Posterior vena cava (tissue), 2 donors: ENCODE measurements at regions of chr15 and their contacts with region 1.

Region 1: DNA sequence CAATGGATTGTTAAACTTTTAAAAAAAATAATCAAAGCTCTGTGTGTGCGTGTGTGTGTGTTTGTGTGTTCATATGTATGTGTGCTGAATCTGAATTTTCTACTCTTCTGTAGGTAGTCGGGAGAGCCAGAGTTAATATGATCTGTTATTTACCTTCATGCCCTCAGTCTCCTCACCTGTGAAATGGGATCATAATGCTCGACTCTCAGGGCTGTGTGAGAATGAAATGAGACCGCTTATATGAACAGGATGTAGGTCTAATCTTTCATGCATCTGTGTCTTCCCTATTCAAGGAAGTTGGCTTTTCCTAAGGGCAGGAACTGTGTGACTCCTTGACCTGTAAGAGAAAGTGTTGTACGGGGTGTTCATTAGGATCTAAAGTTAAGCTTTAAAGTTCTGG is 182.2 kb downstream of the RPLP1 start:
- DNase-seq: no peak

Region 2: DNA sequence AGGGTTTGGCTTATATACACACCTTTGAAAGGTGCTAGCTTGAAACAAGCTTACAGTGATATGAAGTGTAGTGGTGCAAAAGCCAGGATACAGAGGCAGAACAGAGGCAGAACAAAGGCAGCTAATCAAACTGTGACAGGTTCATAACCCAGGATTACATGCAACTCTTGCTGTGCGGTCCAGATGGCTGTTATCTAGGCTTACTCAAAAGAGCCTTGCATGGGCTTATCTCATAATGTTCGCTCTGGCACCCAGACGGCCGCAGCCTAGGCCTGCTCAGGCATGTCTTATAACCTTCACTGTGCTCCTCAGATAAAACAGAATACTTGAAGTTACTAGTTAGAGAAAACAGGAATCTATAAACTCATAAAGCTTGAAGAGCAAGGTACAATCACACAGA is 643.1 kb before region 1 on chr15:
- intact Hi-C with region 1: no loop called
- DNase-seq: no peak

Region 3: DNA sequence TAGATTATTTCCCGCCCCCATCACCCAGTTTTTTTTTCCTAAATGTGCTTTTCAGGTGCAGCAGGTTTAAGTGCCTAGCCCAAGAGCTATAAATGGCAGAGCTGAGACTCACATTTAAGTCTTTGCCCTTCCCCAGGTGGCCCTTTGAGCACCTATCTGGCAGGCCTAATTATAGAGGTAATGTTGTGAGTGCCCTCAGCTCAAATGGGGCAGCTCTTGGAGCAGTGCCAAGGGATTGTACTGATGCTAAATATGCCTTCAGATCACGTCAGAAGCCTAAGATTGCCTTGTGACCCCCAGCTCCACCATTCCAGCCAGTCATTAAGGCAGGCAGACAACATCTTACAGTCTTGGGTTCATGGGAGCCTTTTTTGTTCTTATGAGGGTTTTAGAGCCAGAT is 22.7 kb before region 1 on chr15:
- intact Hi-C with region 1: loop called in 1 of 2 experiments (anchors 1 kb)
- DNase-seq: no peak